MCF 10A (cell line): ENCODE measurements at regions of chr14 and their contacts with region 1.

Region 1: GRCh38 chr14:23727566-23728335 is 91.6 kb downstream of the DHRS2 start:
- DNase-seq: peak; percentile 51
- H3K4me3 Mint-ChIP-seq: no peak overlapping the region
- H3K27ac Mint-ChIP-seq: no peak overlapping the region
- H3K4me1 Mint-ChIP-seq: peaks cover 7% of the 10 kb centered on the region
- H3K27me3 Mint-ChIP-seq: no peaks in the 10 kb centered on the region
- CTCF ChIP-seq: peak; percentile 49

Region 2: DNA sequence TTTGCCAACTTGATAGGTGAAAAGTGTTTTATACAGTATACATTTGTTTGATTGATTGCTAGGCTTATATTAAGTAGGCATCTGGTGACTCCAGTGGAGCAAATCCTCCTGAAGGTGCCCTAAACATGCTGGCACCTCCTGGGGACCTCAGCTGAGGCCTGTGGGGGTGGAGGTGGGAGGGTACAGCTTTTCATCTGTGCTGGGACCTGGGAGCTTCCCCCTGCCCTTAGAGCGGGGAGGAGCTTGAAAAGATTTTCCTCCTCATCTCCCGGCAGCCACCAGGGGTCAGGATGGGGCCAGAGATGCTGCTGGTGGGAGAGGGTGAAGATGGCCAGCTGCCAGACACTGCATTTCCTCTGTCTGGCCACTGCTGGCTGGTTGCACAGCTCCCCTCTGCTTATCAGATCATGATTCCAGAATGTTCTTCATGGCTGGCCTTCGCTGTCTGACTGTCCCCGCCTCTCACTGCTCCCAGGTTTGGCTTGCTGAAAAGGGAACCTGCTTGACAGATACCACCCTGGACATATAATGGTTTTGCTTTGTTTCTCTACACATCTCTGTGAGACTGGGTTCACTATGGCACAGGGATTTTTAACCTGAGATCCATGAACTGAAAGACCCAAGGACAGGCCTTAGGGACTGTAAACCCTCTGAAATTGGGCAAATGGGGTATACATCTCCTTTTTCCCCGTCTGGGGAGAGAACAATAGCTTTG is 138.7 kb before region 1 on chr14:
- CTCF ChIA-PET with region 1: interaction called, 3 read pairs
- POLR2A ChIA-PET with region 1: no interaction called
- intact Hi-C with region 1: loop called (anchors 5 kb)
- DNase-seq: peak; percentile 84
- H3K4me3 Mint-ChIP-seq: no peak overlapping the region
- H3K27ac Mint-ChIP-seq: no peak overlapping the region
- H3K4me1 Mint-ChIP-seq: no peaks in the 10 kb centered on the region
- H3K27me3 Mint-ChIP-seq: no peaks in the 10 kb centered on the region
- CTCF ChIP-seq: peak; percentile 74

Region 3: DNA sequence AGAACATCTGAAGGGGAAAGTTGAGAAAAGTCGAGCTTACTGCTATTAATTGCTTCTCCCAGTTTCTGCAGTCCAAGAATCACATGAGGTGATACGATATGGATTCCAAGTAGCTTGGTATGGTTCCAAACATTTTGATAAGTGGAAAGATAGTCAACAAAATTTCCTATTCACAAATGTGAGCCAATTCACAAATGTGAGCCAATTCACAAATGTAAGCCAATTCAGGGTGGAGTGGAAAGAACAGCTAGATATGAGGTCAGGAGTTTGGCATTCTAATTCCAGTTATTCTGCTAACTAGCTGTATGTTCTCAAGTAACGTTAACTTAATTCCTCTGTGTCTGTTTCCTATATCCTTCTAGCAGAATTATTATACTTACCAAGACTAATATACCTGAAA is 188.3 kb after region 1 on chr14:
- CTCF ChIA-PET with region 1: interaction called, 105 read pairs
- POLR2A ChIA-PET with region 1: interaction called, 5 read pairs
- intact Hi-C with region 1: no loop called
- DNase-seq: no peak
- H3K4me3 Mint-ChIP-seq: no peak overlapping the region
- H3K27ac Mint-ChIP-seq: no peak overlapping the region
- H3K4me1 Mint-ChIP-seq: no peaks in the 10 kb centered on the region
- H3K27me3 Mint-ChIP-seq: no peaks in the 10 kb centered on the region
- CTCF ChIP-seq: no peak

Region 4: GRCh38 chr14:23929822-23930294 is 202.1 kb after region 1 on chr14:
- CTCF ChIA-PET with region 1: interaction called, 7 read pairs
- POLR2A ChIA-PET with region 1: no interaction called
- intact Hi-C with region 1: loop called (anchors 1 kb)
- DNase-seq: peak; percentile 80
- H3K4me3 Mint-ChIP-seq: no peak overlapping the region
- H3K27ac Mint-ChIP-seq: no peak overlapping the region
- H3K4me1 Mint-ChIP-seq: no peaks in the 10 kb centered on the region
- H3K27me3 Mint-ChIP-seq: no peaks in the 10 kb centered on the region
- CTCF ChIP-seq: peak; percentile 73